AG04450 (cell line): ENCODE measurements at regions of chr11 and their contacts with region 1.

Region 1: GRCh38 chr11:86418917-86419316 is 44.2 kb downstream of the CCDC81 start:
- DNase-seq: no peak
- H3K4me3 ChIP-seq: no peak overlapping the region
- H3K27ac ChIP-seq: no peak overlapping the region
- H3K27me3 ChIP-seq: no peaks in the 10 kb centered on the region
- CTCF ChIP-seq: peak; percentile 42

Region 2: DNA sequence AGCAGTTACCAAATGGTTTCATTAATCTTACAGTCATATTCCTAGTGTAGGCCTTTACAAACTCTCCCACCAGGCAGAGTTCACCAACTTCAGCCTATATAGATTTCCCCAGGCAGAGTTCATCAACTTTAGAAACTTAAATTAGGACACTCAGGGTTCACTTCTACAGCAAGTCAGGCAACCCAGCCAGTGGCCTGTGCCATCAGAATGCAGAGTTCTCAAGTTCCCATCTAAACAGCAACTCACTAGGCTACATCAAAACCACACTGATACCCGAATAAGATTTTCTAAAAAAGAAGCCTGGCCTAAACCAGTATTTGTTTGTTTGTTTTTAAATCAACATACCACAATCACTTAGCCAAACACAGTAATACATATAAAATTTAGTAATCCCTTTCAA is 383.8 kb before region 1 on chr11:
- CTCF ChIA-PET with region 1: no interaction called
- POLR2A ChIA-PET with region 1: no interaction called
- DNase-seq: no peak
- H3K4me3 ChIP-seq: no peak overlapping the region
- H3K27ac ChIP-seq: no peak overlapping the region
- H3K27me3 ChIP-seq: no peaks in the 10 kb centered on the region
- CTCF ChIP-seq: no peak

Region 3: DNA sequence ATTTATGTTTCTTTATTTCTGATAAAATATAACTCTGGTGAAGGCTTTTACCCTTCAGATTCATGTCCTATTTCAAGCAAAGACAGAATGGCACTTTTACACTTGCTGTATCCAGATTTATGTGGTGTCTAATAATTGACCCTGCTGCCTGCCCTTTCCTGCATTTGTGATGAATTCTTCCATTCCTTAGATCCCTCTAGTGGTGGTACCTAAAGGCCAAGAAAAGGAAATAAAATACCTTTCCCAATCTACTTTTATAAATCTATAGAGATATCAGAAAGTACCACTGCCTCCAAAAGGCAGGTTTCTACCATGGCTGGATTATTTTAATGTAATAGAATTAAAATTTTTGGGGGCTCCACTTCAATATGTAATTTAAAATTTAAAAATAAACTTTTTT is 10.1 kb before region 1 on chr11:
- CTCF ChIA-PET with region 1: interaction called, 10 read pairs
- POLR2A ChIA-PET with region 1: no interaction called
- DNase-seq: no peak
- H3K4me3 ChIP-seq: no peak overlapping the region
- H3K27ac ChIP-seq: no peak overlapping the region
- H3K27me3 ChIP-seq: no peaks in the 10 kb centered on the region
- CTCF ChIP-seq: peak; percentile 63

Region 4: DNA sequence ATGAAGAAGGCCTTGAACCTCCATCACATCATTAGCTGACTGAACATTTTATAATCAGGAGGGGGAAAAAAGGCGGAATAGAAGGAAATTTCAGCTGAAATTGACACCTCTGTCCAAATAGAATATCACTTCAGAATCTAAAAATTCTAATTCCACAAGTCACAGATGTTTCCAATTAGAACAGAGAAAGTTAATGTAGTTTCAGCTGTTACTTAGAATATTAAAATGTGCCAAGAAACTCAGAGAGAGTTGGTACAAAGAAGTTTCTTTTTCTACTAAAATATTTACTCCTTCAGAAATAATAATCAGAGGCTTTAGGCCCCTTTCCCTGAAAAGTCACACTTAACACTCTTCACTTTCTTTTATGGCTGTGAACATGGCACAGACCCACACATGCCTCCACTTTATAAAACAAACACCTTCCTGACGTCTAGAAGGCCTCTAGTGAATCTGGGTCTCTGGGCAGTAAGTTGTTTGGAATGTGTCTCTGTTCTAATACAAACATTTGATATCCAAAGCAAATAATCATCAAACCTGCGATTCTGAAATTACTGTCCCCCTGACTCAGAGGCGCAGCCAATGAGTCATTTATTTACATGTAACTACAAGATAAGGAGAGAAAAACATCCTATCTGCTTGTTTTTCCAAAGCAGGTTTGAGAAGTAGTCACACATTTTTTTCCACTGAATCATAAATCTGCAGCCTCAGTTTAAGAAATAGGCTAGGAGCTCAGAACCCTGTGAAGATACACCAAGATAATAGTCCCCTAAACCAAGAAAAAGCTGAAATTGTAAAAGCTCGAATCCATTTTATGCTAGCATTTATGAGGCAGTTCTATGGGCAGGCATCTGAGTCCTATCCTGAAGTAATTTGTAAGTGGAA is 105.1 kb after region 1 on chr11:
- CTCF ChIA-PET with region 1: no interaction called
- POLR2A ChIA-PET with region 1: no interaction called
- DNase-seq: peak; percentile 92
- H3K4me3 ChIP-seq: no peak overlapping the region
- H3K27ac ChIP-seq: no peak overlapping the region
- H3K27me3 ChIP-seq: no peaks in the 10 kb centered on the region
- CTCF ChIP-seq: no peak